Activated CD4-positive, alpha-beta T cell treated with anti-CD3 and anti-CD28 coated beads, Interleukin-2, amount 10 ng/mL, durations not matched to agents 24 days and 14 days (primary cell): ENCODE measurements at regions of chr19 and their contacts with region 1.

Region 1: DNA sequence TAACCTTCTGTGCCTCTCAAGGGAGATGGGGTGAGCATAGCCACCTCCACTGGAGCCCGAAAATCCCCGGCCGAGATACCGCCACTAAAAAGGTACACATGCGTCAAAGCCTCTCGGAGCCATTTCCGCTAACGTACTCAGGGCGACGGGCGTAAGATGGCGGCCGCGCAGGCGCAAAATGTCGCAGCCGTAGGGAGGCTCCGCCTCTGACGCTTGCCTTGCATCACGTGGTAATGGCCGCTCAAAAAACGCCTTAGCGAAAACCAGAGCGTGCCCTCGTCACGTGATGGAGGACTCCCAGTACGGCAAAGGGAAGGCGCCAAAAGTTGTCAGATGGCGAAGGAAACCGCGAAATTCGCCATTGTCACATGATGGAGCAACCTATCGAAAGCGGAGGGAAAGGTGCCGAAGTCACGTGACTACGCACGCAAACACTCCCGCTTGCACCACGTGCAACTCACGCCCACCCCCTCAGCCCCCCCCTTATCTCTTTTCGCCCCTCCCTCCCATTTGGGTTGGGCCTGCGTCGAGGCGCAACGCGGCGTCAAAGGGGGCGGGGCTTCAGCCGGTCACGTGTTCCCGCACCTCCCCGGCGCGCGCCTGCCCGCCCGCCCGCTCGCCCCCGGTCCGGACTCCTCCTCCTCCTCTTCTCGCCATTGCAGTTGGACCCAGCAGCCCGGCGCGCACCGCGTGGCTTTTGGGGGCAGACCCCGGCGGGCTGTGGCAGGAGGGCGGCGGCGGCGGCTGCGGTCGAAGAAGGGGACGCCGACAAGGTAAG is at the start of gene ILF3:
- DNase-seq: peak; percentile 100
- H3K4me3 Mint-ChIP-seq: peak within 1 kb of the TSS; percentile 99
- H3K27ac Mint-ChIP-seq: peak within 1 kb of the TSS; percentile 99
- H3K4me1 Mint-ChIP-seq: peaks cover 27% of the 10 kb centered on the region
- H3K27me3 Mint-ChIP-seq: peaks cover 2% of the 10 kb centered on the region
- total RNA-seq, gene ILF3: 588 TPM in 2 replicates

Region 2: DNA sequence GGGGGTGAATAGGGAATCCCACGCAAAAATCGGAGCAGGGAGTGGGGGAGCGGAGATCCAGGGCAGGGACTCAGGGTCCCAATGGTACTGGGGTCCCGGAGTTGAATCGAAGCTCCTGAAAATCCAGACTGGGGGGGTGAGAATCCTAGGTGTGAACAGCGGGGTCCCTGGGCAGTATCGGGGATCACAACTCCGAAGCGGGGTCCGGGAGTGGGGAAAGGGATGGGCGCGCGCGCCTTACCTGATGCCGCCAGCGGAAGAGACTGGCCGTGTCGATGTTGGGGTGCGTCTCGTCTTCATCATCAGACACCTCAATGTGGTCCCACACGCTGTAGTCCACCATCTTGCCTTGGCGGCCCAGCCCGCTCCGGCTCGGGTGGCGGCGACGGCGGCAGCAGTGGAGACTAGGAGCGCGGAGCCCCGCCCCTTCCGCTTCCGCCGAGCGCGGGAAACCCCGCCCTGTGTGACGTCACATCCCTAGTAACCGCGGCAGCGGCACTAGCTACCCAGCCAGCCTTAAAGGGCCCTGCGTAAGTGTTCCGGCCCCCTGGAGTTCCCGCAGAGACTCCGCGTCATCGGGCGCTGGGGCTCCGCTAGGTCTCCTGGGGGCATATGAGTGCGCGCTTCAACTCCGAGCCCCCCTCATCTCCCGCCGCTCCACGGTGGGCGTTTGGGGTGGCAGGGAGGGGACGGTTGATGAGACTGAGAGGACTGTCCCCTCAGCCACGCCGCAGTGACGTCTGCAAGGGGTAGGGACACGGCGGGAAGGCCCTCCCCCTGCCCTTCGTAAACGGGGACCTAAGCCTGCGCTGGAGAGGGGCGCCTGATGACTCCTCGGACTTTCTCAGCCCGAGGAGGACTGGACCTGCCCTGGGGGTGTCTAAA is 250.5 kb before region 1 on chr19 and contains the start of gene CDC37:
- intact Hi-C with region 1: loop called (anchors 5 kb)
- DNase-seq: peak; percentile 100
- H3K4me3 Mint-ChIP-seq: peak within 1 kb of the TSS; percentile 99
- H3K27ac Mint-ChIP-seq: peak within 1 kb of the TSS; percentile 98
- H3K4me1 Mint-ChIP-seq: peaks cover 58% of the 10 kb centered on the region
- H3K27me3 Mint-ChIP-seq: no peaks in the 10 kb centered on the region
- total RNA-seq, gene CDC37: 304 and 310 TPM in 2 replicates

Region 3: GRCh38 chr19:10502524-10503001 is 151.3 kb before region 1 on chr19:
- intact Hi-C with region 1: loop called (anchors 2 kb)
- DNase-seq: peak; percentile 98
- H3K4me3 Mint-ChIP-seq: peak overlapping the region; percentile 88
- H3K27ac Mint-ChIP-seq: peak overlapping the region; percentile 86
- H3K4me1 Mint-ChIP-seq: peaks cover 37% of the 10 kb centered on the region
- H3K27me3 Mint-ChIP-seq: no peaks in the 10 kb centered on the region

Region 4: DNA sequence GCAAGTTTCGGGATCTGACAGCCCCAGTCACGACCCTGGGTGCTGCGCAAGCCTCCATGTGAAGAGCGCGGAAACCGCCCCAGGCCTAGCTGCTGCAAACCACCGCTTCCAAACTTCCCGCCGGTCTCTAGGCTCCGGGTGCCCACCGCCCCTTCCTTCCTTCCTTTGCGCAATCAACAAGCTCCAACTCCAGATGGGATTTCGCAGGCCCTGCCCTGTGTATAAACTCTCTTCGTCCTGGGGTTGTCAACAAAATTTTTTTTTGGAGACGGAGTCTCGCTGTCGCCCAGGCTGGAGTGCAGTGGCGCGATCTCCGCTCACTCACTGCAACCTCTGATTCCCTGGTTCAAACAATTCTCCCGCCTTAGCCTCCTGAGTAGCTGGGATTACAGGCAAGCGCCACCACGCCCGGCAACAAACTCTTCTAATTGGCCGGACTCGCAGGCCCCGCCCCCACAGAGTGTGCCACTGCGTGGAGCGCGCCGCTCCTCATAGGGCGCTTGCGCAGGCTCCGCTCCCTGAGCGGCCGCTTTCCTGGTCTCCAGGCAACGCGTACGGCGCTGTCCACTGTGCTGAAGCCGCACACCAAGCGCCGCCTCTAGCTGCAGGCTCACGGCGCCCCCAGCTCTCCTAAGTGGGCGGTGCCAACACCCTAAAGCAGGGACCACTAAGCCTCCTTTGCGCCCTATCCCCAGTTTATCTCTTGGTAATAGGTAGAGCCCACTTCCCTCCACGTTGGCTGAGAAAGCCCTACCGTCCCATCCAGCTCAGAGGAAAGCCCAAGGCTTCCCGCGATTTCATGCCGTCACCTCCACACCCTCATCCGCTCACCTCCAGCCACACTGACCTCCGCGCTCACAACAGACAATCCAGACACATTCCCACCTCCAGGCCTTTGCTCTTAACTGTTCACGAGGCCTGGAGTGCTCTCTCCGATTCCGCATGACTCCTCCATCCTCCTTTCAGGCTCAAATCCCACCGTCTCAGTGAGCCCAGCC is 41.8 kb after region 1 on chr19:
- intact Hi-C with region 1: loop called (anchors 2 kb)
- DNase-seq: peak; percentile 98
- H3K4me3 Mint-ChIP-seq: peak overlapping the region; percentile 85
- H3K27ac Mint-ChIP-seq: peak overlapping the region; percentile 75
- H3K4me1 Mint-ChIP-seq: peaks cover 18% of the 10 kb centered on the region
- H3K27me3 Mint-ChIP-seq: peaks cover 6% of the 10 kb centered on the region

Region 5: GRCh38 chr19:10946964-10947657 is 293.2 kb after region 1 on chr19:
- intact Hi-C with region 1: no loop called
- DNase-seq: no peak
- H3K4me3 Mint-ChIP-seq: no peak overlapping the region
- H3K27ac Mint-ChIP-seq: no peak overlapping the region
- H3K4me1 Mint-ChIP-seq: no peaks in the 10 kb centered on the region
- H3K27me3 Mint-ChIP-seq: no peaks in the 10 kb centered on the region